Mammary epithelial cell (primary cell): ENCODE measurements at regions of chr16 and their contacts with region 1.

Region 1: DNA sequence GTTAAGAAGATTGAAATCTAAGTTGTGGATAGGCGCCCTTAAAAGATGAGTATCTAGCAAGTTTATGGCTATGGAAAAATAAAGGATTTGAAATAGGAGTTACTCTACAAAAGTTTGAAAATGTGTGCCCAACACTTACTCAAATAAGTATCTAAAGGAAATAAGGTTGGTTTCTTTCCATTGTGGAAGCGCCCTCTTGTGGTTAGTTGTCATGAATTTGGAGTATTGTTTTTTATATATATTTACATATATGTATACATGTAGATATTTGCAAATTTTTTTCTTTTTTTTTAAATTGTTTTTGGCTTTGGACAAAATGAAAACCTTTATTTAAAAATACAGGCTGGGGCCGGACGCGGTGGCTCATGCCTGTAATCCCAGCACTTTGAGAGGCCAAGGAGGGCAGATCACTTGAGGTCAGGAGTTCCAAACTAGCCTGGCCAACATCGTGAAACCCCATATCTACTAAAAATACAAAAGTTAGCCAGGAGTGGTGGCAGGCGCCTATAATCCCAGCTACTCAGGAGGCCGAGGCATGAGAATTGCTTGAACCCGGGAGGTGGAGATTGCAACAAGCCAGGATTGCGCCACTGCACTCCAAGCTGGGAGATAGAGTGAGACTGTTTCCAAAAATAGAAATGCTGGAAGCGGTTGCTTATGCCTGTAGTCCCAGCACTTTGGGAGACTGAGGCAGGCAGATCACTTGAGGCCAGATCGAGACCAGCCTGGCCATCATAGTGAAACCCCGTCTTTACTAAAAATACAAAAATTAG is 24.0 kb upstream of the VPS4A start:
- DNase-seq: peak; percentile 31
- H3K4me3 ChIP-seq: no peak overlapping the region
- H3K27ac ChIP-seq: no peak overlapping the region
- H3K4me1 ChIP-seq: no peaks in the 10 kb centered on the region
- H3K27me3 ChIP-seq: no peaks in the 10 kb centered on the region
- CTCF ChIP-seq: peak; percentile 49

Region 2: DNA sequence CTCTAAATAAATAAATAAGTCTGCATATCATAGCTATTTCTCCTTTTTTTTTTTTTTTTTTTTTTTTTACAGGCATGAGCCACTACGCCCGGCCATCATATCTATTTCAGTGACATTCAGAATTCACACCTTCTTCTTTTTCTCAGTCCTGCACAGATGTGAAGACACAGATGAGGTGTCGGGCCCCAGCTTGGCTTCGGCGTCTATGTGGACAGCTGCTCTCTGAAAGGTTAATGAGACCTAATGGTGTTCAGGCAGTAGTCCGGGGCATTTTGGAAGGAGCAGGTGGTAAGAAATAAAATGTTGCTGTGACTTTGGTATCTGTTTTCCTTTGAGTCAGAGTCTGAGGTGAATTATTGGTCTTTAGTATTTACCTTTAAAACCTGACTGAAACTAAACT is 420.2 kb before region 1 on chr16:
- CTCF ChIA-PET with region 1: no interaction called
- dilution Hi-C with region 1: no loop called
- in situ Hi-C with region 1: loop called (anchors 25 kb)
- intact Hi-C with region 1: no loop called
- DNase-seq: no peak
- H3K4me3 ChIP-seq: no peak overlapping the region
- H3K27ac ChIP-seq: no peak overlapping the region
- H3K4me1 ChIP-seq: no peaks in the 10 kb centered on the region
- H3K27me3 ChIP-seq: no peaks in the 10 kb centered on the region
- CTCF ChIP-seq: no peak

Region 3: DNA sequence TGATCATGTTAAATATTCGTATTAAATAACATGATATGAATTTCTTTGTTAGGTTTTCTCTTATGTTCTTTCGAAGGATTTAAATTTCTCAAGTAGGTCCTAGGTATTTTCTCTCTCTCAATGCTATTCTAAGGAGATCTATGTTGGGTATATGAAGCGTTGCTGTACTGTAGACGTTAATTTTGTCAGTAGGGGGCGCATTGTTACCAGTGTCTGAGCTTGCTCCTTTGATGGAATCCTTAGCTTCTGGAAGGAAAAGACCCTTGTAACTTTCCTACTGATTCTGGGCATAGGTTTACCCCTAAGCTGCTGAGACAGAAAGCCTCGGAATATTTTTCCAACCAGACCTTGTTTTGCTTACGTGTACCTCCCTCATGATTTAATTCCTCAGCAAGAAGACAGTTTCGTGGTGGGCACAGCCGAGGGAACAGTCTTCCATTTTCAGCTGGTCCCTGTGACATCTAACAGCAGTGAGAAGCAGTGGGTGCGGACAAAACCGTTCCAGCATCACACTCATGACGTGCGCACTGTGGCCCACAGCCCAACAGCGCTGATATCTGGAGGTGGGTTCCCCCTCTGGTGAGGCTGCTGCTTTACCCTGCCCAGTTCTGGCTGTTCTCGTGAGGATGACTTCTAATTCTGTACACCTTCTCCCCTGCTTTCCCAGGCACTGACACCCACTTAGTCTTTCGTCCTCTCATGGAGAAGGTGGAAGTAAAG is 136.8 kb before region 1 on chr16:
- CTCF ChIA-PET with region 1: interaction called, 4 read pairs
- dilution Hi-C with region 1: no loop called
- in situ Hi-C with region 1: loop called (anchors 5 kb)
- intact Hi-C with region 1: loop called (anchors 1 kb)
- DNase-seq: peak; percentile 47
- H3K4me3 ChIP-seq: no peak overlapping the region
- H3K27ac ChIP-seq: no peak overlapping the region
- H3K4me1 ChIP-seq: no peaks in the 10 kb centered on the region
- H3K27me3 ChIP-seq: no peaks in the 10 kb centered on the region
- CTCF ChIP-seq: peak; percentile 66 to 77

Region 4: DNA sequence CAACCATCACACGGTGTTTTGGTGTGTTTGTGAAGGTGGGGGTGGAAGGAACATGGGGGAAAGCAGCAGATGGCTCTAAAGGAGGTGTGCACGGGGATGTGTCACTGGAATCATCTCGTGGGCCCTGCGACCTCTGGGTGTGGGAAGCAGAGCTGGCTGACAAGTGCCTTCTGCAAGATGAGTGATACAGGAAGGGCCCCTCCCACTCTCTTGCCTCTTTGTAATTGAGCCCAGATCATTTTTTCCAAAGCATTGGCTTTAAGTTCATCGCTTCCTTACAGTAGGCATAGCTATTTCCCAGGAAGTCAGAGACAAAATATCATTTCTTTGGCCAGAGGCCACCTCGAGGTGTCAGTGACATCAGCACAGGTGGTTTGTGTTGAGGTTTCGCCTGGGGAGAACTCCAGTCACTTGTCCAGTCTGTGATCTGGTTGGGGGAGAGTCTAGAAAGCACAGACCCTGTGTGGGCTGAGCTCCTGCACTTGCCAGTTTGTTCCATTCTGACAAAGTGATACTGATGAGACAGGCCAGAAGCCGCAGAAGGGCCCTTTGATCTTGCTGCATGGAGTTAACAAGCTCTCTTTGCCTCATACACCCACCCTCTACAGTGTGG is 120.8 kb before region 1 on chr16:
- CTCF ChIA-PET with region 1: no interaction called
- dilution Hi-C with region 1: no loop called
- in situ Hi-C with region 1: no loop called
- intact Hi-C with region 1: loop called (anchors 1 kb)
- DNase-seq: peak; percentile 42
- H3K4me3 ChIP-seq: no peak overlapping the region
- H3K27ac ChIP-seq: peak overlapping the region; percentile 64
- H3K4me1 ChIP-seq: peaks cover 28% of the 10 kb centered on the region
- H3K27me3 ChIP-seq: no peaks in the 10 kb centered on the region
- CTCF ChIP-seq: no peak

Region 5: DNA sequence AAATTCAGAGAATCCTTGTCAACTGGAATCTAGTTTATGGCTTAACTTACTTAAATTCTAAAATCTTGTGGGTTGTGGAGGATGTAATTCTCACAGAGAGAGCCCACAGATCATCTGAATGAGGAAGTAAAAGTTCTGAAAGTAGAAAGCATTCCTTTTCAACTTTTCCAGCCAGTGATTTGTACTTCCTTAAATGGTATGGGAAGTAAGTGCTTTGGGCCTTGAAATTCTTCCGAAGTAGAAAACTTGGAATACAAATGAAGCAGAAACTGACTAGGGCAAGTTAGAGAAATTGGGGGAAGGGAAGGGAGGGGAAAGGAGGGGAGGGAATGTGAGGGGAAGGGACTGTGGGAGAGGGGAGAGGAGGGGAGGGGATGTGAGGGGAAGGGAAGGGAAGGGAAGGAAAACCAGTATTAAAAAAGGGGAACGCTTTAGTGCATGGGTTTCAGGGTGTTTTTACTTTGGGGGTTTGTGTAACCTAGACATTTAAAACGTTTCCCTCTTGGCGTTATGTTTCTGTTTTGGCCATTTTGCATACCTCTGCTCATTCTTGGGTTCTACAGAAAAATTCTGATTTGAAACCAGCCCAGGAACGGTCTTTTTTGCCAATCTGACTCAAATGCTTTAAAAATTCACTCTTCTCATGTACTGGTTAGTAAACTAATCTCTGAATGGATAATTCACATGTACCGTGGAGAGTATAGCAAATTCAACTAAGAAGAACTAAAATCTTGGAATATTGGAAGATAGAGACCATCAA is 115.6 kb before region 1 on chr16:
- CTCF ChIA-PET with region 1: no interaction called
- dilution Hi-C with region 1: no loop called
- in situ Hi-C with region 1: no loop called
- intact Hi-C with region 1: loop called (anchors 1 kb)
- DNase-seq: no peak
- H3K4me3 ChIP-seq: no peak overlapping the region
- H3K27ac ChIP-seq: no peak overlapping the region
- H3K4me1 ChIP-seq: peaks cover 26% of the 10 kb centered on the region
- H3K27me3 ChIP-seq: no peaks in the 10 kb centered on the region
- CTCF ChIP-seq: no peak

Region 6: DNA sequence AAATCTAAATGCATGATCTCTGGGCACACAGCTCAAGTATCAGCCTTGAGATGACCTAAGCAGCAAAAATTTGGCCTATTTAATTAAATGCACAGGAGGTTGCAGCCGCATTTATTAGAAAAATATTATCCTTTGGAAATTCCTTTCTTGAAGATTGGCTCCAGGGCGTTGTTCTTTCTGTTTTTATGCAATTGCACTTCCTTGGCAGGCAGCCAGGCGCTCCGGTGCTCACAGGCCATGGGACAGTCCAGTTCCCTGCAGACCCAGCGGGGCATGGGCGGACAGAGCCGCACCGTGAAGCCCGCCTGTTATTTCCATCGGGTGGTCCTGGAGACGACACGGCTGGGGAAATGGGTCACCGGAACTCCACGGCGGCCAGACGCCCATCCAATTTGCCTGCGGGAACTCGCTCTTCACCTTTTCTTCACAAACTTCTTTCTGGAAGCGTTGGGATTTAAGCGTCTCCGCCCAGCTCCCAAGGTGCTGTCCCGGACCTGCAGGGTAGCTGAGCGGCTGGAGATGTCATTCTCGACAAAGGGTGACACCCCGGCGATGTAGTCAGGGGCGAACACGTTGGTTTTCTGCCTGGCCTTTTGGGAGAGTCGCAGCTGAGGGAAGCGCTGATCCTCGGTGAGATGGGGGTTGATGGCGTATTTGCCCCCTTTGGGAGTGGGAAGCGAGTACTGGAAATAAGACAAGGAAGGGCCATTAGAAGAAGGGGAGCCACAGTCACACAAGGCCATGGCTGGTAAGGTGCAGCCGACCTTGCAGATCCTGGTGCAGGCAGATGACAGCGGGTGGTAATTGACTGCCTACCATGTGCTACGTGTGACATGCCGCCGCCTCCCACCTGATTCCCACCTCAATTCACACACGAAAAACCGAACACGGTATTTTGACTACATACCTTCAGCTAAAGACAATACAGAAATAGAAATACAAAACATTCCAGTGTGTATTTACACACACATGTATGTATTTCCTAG is 455.1 kb after region 1 on chr16:
- CTCF ChIA-PET with region 1: no interaction called
- dilution Hi-C with region 1: no loop called
- in situ Hi-C with region 1: no loop called
- intact Hi-C with region 1: no loop called
- DNase-seq: peak; percentile 69
- H3K4me3 ChIP-seq: no peak overlapping the region
- H3K27ac ChIP-seq: no peak overlapping the region
- H3K4me1 ChIP-seq: peaks cover 14% of the 10 kb centered on the region
- H3K27me3 ChIP-seq: no peaks in the 10 kb centered on the region
- CTCF ChIP-seq: no peak